Sciatic nerve (tissue), 2 donors: ENCODE measurements at regions of chr7 and their contacts with region 1.

Region 1: GRCh38 chr7:18583305-18583704 is 87.8 kb downstream of the HDAC9 start:
- DNase-seq: no peak
- ATAC-seq: no peak

Region 2: DNA sequence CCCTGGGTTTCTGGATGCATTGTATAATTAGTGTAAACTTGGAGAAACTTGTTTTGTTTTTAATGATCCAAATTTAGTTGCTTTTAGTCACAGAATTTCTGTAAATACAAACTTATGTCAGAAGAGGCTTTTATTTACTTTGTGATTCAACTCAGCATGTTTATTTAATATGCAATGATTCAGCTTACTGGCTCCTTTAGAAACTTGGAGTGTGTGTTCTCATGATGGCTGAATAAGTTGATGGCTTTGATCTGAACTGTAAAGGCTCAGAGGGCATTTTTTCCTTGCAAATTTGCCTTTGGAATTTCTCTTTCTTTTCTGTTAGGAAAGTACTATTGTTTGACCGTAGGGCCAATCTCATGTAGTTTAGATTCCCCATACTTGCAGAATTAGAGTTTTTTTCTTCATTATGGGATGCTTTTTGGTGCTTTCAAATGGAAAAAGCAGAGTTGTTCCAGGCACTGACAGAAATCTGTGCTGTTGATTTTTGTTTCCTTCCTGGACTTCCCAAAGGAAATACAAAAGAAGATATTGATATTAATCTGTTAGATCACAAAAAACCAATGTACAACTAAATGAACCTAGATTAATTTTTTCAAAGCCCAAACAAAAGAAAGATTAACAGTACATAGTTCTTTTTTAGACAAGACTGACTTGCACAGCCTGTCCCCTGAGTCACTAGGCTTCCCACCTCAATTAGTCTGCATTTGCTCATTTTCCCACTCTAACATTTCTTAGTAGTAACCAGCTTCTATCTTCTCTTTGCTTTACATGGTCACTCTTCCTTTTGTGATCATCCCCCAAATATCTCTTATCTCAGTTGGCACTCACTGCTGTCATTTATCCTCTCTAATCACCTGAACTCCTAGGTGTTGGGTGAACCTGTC is 1604.7 kb before region 1 on chr7:
- intact Hi-C with region 1: no loop called
- DNase-seq: no peak
- ATAC-seq: no peak

Region 3: GRCh38 chr7:18558503-18558902 is 24.8 kb before region 1 on chr7:
- intact Hi-C with region 1: no loop called
- DNase-seq: no peak
- ATAC-seq: no peak

Region 4: DNA sequence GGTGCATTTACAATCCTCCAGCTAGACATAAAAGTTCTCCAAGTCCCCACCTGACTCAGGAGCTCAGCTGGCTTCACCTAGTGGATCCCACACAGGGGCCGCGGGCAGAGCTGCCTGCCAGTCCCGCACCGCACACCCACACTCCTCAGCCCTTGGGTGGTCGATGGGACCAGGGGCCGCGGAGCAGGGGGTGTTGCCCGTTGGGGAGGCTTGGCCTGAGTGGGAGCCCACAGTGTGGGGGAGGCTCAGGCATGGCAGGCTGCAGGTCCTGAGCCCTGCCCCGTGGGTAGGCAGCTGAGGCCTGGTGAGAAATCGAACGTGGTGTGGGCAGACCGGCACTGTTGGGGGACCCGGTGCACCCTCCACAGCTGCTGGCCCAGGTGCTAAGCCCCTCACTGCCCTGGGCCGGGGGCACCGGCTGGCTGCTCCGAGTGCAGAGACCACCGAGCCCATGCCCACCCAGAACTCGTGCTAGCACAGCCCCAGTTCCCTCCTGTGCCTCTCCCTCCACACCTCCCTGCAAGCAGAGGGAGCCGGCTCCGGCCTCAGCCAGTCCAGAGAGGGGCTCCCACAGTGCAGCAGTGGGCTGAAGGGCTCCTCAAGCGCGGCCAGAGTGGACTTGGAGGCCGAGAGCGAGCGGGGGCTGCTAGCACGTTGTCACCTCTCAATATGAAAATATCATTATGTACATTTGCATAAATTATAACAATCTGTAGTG is 1109.0 kb after region 1 on chr7:
- intact Hi-C with region 1: loop called (anchors 10 kb)
- DNase-seq: no peak
- ATAC-seq: no peak